Activated CD4-positive, alpha-beta memory T cell treated with anti-CD3 and anti-CD28 coated beads for 36 hours (primary cell): ENCODE measurements at regions of chr11 and their contacts with region 1.

Region 1: GRCh38 chr11:124758317-124759203 is 3.5 kb downstream of the ESAM start:
- DNase-seq: peak; percentile 83
- H3K4me3 Mint-ChIP-seq: peak overlapping the region; percentile 54
- H3K27ac Mint-ChIP-seq: peak overlapping the region; percentile 35
- H3K4me1 Mint-ChIP-seq: peaks cover 19% of the 10 kb centered on the region
- H3K27me3 Mint-ChIP-seq: peaks cover 50% of the 10 kb centered on the region

Region 2: GRCh38 chr11:124644426-124645280 is 113.9 kb before region 1 on chr11:
- CTCF ChIA-PET with region 1: interaction called, 9 read pairs
- POLR2A ChIA-PET with region 1: no interaction called
- intact Hi-C with region 1: loop called (anchors 1 kb)
- DNase-seq: peak; percentile 38
- H3K4me3 Mint-ChIP-seq: no peak overlapping the region
- H3K27ac Mint-ChIP-seq: no peak overlapping the region
- H3K4me1 Mint-ChIP-seq: peaks cover 2% of the 10 kb centered on the region
- H3K27me3 Mint-ChIP-seq: no peaks in the 10 kb centered on the region

Region 3: GRCh38 chr11:124707829-124708228 is 50.7 kb before region 1 on chr11:
- CTCF ChIA-PET with region 1: no interaction called
- POLR2A ChIA-PET with region 1: no interaction called
- intact Hi-C with region 1: no loop called
- DNase-seq: no peak
- H3K4me3 Mint-ChIP-seq: no peak overlapping the region
- H3K27ac Mint-ChIP-seq: no peak overlapping the region
- H3K4me1 Mint-ChIP-seq: no peaks in the 10 kb centered on the region
- H3K27me3 Mint-ChIP-seq: peaks cover 3% of the 10 kb centered on the region

Region 4: GRCh38 chr11:124746621-124747243 is 11.8 kb before region 1 on chr11:
- CTCF ChIA-PET with region 1: interaction called, 107 read pairs
- POLR2A ChIA-PET with region 1: interaction called, 4 read pairs
- intact Hi-C with region 1: loop called (anchors 1 kb)
- DNase-seq: peak; percentile 85
- H3K4me3 Mint-ChIP-seq: peak overlapping the region; percentile 87
- H3K27ac Mint-ChIP-seq: peak overlapping the region; percentile 89
- H3K4me1 Mint-ChIP-seq: peaks cover 6% of the 10 kb centered on the region
- H3K27me3 Mint-ChIP-seq: no peaks in the 10 kb centered on the region

Region 5: DNA sequence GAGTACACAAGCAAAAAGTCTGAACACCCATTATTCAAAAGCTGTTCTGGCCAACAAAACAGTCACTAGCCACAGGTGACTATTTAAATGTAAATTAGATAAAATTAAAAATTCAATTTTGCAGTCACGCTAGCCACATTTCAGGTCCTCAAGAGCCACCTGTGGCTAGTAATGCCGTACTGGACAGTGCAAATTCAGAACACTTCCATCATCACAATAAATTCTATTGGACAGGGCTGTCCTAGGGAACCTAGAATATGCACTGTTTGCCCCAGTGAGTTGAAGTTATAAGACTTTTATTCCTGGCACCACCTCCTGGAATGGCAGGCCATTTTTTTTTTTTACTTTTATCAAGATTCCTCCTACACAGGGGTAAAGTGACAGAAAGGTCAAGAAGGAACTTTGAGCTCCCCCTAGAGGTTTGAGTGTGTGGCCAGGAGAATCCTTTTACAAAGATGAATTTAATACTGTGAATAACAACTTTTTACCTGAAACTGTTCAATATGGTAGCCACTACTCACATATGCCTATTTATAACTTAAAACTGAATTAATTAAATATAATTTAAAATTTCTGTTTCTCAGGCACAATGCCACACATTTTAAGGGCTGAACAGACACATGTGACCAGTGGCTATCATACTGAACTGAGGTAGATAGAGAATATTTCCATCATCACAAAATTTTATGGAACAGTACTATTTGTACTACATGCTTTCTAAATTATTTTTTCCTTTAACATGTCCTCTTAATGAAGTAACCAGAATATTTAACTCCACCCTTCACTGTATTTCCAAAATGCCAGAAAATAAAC is 35.1 kb after region 1 on chr11:
- CTCF ChIA-PET with region 1: interaction called, 51 read pairs
- POLR2A ChIA-PET with region 1: no interaction called
- intact Hi-C with region 1: no loop called
- DNase-seq: peak; percentile 17
- H3K4me3 Mint-ChIP-seq: no peak overlapping the region
- H3K27ac Mint-ChIP-seq: no peak overlapping the region
- H3K4me1 Mint-ChIP-seq: peaks cover 31% of the 10 kb centered on the region
- H3K27me3 Mint-ChIP-seq: no peaks in the 10 kb centered on the region

Region 6: DNA sequence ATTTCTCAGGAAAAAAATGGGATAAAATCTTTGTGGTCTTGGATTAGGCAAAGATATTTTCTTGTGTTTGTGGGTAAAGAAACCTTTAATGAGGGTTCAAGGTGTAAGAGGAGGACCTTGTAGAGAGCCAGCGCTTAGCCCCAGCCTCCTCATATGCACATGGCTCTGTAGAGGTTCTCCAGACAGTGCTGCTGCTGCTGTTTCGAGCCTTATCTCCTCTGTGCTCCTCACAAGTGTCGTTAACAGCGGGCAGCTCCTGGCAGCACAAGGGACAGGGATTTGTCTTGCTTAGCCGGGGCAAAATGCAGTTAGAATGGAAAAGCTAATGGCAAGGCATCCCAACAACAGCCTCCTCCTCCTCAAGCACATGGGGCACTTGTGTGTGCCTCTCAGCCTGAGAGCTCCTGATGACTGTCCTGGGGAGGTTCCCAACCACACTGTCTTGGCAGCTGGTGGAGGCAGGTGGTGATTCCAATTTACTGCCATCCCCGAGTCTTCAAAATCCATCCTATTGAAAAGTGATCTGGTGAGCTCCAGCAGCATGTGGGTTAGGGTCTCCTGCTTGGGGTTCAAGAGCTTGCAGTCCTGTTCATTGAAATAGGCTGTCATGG is 49.2 kb after region 1 on chr11:
- CTCF ChIA-PET with region 1: interaction called, 10 read pairs
- POLR2A ChIA-PET with region 1: no interaction called
- intact Hi-C with region 1: no loop called
- DNase-seq: no peak
- H3K4me3 Mint-ChIP-seq: no peak overlapping the region
- H3K27ac Mint-ChIP-seq: no peak overlapping the region
- H3K4me1 Mint-ChIP-seq: no peaks in the 10 kb centered on the region
- H3K27me3 Mint-ChIP-seq: peaks cover 9% of the 10 kb centered on the region

Region 7: DNA sequence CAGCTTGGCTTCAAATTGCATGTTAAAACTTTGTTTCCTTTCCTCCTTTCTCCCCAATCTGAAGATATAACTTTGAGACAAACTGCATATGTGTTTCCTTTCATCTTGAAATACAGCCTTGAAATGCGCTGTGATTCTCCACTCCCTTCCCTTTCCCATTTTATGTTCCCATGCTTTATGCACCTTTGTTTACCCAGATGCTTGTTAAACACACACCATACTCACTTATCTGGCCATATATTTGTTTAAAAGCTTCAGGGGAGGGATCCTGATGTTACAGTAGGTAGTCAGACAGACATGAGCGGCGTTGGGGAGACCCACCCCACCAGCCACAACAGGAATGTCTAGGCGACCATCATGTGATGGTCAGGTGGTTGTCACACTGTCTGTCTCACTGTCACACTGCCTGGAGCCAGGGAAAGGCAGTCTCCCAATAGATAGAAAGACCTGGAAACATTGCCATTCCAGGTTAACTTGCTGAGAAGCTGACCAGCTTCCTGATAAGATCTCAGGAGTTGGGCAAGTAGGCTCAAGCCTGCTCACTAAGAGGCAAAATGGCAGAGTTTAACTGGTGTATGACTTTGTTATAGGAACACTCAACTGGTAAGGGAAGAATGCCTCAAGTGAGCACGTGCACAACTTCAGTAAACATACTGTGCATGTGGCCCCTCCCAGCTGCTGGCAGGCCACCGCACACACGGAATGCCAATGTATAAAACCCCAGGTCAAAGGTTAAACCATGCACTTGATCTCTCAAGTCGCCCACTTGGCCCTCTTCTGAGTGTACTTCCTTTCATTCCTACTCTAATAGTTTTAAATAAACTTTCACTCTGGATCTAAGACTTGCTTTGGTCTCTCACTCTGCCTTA is 65.2 kb after region 1 on chr11:
- CTCF ChIA-PET with region 1: no interaction called
- POLR2A ChIA-PET with region 1: no interaction called
- intact Hi-C with region 1: no loop called
- DNase-seq: no peak
- H3K4me3 Mint-ChIP-seq: no peak overlapping the region
- H3K27ac Mint-ChIP-seq: no peak overlapping the region
- H3K4me1 Mint-ChIP-seq: no peaks in the 10 kb centered on the region
- H3K27me3 Mint-ChIP-seq: peaks cover 21% of the 10 kb centered on the region

Region 8: DNA sequence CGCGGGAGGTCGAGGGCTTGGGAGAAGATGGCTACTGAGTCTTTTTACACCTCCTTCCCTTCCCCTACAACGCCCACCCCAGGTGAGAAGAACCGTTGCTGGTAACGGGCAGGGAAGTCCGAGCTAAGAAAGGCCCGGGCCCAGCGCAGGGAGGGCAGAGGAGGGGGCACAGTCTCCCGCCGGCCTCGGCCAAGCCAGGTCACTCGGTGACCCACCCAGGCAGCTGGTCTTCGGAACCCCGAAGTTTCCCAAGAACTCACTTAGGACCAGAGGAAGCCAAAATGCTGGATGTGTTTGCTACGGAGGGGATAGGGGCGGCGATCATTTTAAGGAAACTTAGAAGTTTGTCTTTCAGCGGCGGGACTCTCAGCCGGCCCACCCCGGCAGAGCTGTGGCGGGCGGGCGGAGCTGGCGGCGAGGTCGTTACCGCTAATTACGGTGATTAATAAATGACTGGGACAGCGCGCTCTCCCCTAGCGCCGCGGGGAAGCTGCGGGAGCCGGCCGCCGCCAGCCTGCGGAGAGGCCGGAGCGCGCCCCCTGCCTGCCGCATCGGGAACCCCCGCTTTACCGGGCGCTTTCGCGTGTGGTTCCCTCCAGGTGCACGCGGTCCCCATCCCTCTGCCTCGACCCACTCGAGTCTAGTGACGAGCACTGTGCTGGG is 107.5 kb after region 1 on chr11:
- CTCF ChIA-PET with region 1: interaction called, 6 read pairs
- POLR2A ChIA-PET with region 1: no interaction called
- intact Hi-C with region 1: loop called (anchors 5 kb)
- DNase-seq: peak; percentile 68
- H3K4me3 Mint-ChIP-seq: no peak overlapping the region
- H3K27ac Mint-ChIP-seq: no peak overlapping the region
- H3K4me1 Mint-ChIP-seq: peaks cover 36% of the 10 kb centered on the region
- H3K27me3 Mint-ChIP-seq: peaks cover 77% of the 10 kb centered on the region